ENCODE measurements at regions of chr10 and their contacts with region 1.

Region 1: DNA sequence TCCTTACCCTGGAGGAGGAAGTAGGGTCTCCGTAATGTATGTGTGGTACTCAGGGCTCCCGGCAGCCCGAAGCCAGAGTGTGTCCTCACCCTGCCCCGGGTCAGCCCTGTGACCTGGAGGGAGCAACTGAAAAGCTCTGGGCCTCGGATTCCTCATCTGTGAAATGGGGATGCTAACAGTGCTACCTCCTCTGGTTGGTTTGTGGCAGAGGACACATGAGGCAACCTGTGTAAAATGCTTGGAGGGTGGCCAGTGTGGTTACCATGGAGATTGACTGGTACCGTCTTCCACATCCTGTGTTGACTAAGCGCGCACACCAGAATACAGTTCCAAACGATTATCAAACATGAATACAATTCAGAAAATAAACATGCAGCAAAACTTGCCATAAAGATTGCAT is 163.8 kb upstream of the KLF6 start:
- DNase-seq: peak; percentile 62
- ATAC-seq: peak; percentile 78
- H3K4me3 Mint-ChIP-seq: peak overlapping the region; percentile 79
- H3K27ac Mint-ChIP-seq: peak overlapping the region; percentile 88
- H3K4me1 Mint-ChIP-seq: peaks cover 75% of the 10 kb centered on the region
- H3K27me3 Mint-ChIP-seq: no peaks in the 10 kb centered on the region

Region 2: GRCh38 chr10:3805791-3806461 is 142.9 kb before region 1 on chr10:
- POLR2A ChIA-PET with region 1: interaction called, 79 read pairs
- DNase-seq: no peak
- ATAC-seq: no peak
- H3K4me3 Mint-ChIP-seq: peak overlapping the region; percentile 77
- H3K27ac Mint-ChIP-seq: peak overlapping the region; percentile 98
- H3K4me1 Mint-ChIP-seq: peaks cover 57% of the 10 kb centered on the region
- H3K27me3 Mint-ChIP-seq: no peaks in the 10 kb centered on the region

Region 3: DNA sequence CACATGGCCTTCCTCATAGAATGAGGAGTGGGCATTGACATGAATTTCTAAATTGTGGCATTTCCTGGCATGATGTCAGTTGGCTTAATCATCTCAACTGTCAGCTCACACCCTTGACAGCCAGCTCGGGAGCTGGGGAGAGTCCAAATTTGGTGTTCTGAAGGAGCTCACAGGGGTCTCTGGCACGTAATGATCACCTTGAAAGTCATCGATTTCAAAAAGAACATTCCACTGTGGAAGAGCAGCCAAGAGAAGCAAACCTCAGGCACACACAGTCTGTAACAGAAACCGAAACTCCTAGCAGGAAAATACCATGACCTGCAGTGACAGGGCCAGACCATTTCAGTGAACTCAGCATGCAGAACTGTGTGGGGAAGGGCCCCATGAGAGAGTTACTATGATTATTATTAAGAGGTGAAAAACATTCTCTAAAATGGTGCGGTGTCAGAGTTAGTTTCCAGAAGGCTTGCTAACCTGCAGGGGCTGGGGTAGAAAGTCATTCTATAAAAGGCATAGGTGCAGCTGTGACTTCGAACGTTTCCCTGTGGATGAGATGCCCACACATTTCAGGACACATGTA is 137.5 kb before region 1 on chr10:
- POLR2A ChIA-PET with region 1: interaction called, 79 read pairs
- DNase-seq: no peak
- ATAC-seq: peak; percentile 41
- H3K4me3 Mint-ChIP-seq: peak overlapping the region; percentile 81
- H3K27ac Mint-ChIP-seq: peak overlapping the region; percentile 97
- H3K4me1 Mint-ChIP-seq: peaks cover 75% of the 10 kb centered on the region
- H3K27me3 Mint-ChIP-seq: no peaks in the 10 kb centered on the region

Region 4: GRCh38 chr10:3935141-3935540 is 13.7 kb before region 1 on chr10:
- POLR2A ChIA-PET with region 1: interaction called, 14 read pairs
- DNase-seq: no peak
- ATAC-seq: peak; percentile 89
- H3K4me3 Mint-ChIP-seq: peak overlapping the region; percentile 76
- H3K27ac Mint-ChIP-seq: peak overlapping the region; percentile 98
- H3K4me1 Mint-ChIP-seq: peaks cover 50% of the 10 kb centered on the region
- H3K27me3 Mint-ChIP-seq: no peaks in the 10 kb centered on the region

Region 5: DNA sequence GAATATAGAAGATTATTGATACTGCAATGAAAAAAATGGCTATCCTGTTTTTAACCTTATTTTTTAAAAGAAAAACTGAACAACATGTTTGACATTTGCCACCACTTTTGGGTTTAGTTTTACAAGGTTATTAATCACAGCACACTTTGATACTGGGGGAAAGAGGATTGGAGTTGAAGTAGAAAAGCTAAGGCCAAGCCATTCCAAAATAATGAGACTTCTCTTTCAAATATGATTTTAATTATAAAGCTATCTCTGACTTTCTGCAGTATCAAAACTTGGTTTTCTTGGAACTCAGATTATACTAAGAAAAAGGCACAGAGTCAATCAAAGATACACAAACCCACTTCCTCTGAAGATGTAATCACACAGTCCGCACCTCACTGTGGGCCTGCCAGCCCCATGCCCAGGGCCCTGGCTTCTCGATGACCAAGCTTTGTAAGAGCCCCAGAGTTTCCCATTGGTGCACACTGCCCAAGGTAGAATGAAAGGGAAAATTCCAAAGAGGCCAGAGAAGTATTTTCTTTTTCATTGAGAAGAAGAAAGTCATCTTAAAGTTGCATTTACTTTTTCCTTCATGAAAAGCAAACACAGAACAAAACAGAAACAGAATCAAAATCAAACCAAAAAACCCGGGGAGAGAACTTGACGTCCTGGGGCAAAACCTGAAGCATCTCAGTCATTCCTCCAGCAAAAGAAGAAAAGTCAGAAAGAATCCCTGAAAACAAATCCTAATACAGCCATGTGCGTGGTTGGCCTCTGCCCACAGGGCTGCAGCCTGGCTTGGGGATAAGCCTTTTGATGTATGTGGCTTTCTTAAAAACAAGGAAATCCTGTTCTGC is 23.8 kb after region 1 on chr10:
- POLR2A ChIA-PET with region 1: interaction called, 49 read pairs
- DNase-seq: no peak
- ATAC-seq: peak; percentile 89
- H3K4me3 Mint-ChIP-seq: peak overlapping the region; percentile 82
- H3K27ac Mint-ChIP-seq: peak overlapping the region; percentile 96
- H3K4me1 Mint-ChIP-seq: peaks cover 51% of the 10 kb centered on the region
- H3K27me3 Mint-ChIP-seq: no peaks in the 10 kb centered on the region

Region 6: DNA sequence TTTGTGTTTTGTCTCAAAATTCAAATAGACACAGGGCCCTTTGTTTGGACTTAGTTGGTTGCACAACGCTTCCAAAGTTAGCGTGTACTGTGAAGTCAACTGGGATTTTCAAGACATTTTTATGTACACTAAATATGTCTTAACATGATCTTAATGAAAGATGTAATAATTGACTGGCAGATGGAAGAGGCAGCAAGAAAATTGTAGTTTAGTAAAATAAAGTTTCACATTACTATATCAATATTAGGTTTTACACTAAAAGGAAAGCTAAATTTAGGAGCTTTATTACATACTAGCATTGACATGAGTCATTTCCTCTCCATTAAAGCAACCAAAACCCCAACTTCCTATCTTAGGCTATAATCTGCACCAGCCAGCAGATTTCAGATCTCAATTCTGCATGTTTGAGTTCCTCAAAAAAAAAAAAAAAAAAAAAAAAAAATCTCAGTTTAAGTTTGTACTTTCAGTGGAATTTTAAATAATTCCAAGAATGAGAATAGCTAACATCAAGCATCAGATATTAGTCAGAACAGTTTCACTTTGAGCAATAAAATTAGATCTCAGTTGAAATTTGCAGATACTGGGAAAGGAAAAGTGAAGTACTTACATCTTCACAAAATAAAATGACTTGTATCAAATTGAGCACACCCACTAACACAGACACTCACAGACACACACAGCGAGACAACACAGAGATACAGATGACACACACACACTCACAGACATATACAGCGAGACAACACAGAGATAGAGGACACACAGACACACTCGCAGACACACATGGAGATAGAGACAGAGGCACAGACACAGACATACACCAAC is 182.8 kb after region 1 on chr10:
- POLR2A ChIA-PET with region 1: interaction called, 15 read pairs
- DNase-seq: peak; percentile 36
- ATAC-seq: peak; percentile 73
- H3K4me3 Mint-ChIP-seq: no peak overlapping the region
- H3K27ac Mint-ChIP-seq: no peak overlapping the region
- H3K4me1 Mint-ChIP-seq: peaks cover 44% of the 10 kb centered on the region
- H3K27me3 Mint-ChIP-seq: no peaks in the 10 kb centered on the region

Measured in activated naive CD8-positive, alpha-beta T cell treated with anti-CD3 and anti-CD28 coated beads, Interleukin-2, amount 10 ng/mL, durations not matched to agents 7 days and 5 days (primary cell).